HEK293 (cell line): ENCODE measurements at regions of chr22 and their contacts with region 1.

Region 1: GRCh38 chr22:36065775-36066559 is 37.3 kb upstream of the RBFOX2 start:
- H3K4me3 ChIP-seq: peak overlapping the region; percentile 57
- H3K27ac ChIP-seq: peak overlapping the region; percentile 64
- H3K4me1 ChIP-seq: no peaks in the 10 kb centered on the region
- CTCF ChIP-seq: peak; percentile 100

Region 2: DNA sequence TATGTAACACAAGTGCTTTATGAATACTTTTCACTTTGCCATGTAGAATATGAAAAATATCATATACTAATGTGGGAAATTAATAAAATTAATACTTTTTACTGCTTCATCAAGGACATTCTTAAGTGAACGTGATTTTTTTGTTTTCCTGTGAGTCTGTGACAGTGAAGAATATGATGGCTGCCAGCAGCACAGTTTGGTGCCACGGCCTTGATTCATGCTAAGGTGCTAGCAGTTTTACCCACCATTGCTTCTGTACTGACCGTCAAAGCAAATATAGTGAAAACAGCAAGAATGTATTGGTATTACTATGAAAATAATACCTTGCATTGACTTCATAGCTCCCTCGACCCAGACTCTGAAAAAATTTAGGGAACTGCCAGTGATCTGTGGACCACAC is 268.6 kb before region 1 on chr22:
- CTCF ChIA-PET with region 1: interaction called, 10 read pairs
- POLR2A ChIA-PET with region 1: no interaction called
- H3K4me3 ChIP-seq: no peak overlapping the region
- H3K27ac ChIP-seq: no peak overlapping the region
- H3K4me1 ChIP-seq: peaks cover 5% of the 10 kb centered on the region; the same call in 1 of the 2 replicates
- CTCF ChIP-seq: no peak

Region 3: DNA sequence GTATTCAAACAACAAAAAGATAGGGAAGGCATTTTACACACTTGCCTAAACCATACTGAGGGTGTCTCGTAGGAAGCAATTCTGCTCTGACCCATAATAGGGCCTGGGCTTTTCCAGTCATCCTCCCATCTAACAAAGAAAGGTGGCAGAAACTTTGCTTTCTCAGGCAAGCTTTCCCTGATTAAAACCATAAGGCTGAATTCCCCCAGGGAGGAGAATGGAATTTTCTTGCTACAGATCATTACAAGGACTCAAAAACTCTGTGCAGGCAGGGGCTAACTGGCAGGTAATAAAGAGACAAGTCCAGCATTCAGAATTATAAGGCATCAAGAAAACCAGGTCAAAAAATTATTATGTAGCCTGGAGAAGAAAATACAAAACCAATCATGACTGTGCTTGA is 127.7 kb before region 1 on chr22:
- CTCF ChIA-PET with region 1: interaction called, 127 read pairs
- POLR2A ChIA-PET with region 1: interaction called, 3 read pairs
- H3K4me3 ChIP-seq: no peak overlapping the region
- H3K27ac ChIP-seq: no peak overlapping the region
- H3K4me1 ChIP-seq: peaks cover 4% of the 10 kb centered on the region; the same call in 1 of the 2 replicates
- CTCF ChIP-seq: no peak

Region 4: DNA sequence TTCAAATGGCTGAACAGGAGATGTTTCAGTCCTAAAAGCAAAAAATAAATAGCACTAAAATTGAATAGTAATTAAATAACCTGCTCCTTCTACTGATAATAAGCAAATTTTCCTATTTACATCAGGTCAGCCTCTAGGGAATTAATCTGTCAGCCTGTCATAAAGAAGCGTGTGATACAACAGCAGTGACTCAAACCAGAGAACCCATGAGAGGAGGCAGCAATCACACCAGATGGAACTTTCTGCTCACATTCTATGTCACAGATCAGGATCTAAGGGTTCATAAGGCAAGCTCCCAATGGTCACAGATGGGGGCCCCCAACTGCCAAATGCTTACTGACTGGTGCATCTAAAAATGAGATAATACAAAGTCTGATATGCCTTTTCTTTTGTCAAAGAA is 78.5 kb before region 1 on chr22:
- CTCF ChIA-PET with region 1: interaction called, 17 read pairs
- POLR2A ChIA-PET with region 1: no interaction called
- H3K4me3 ChIP-seq: no peak overlapping the region
- H3K27ac ChIP-seq: no peak overlapping the region
- H3K4me1 ChIP-seq: peaks cover 38% of the 10 kb centered on the region
- CTCF ChIP-seq: no peak

Region 5: GRCh38 chr22:36037102-36037758 is 28.7 kb before region 1 on chr22:
- CTCF ChIA-PET with region 1: interaction called, 16 read pairs
- POLR2A ChIA-PET with region 1: interaction called, 3 read pairs
- H3K4me3 ChIP-seq: no peak overlapping the region
- H3K27ac ChIP-seq: no peak overlapping the region
- H3K4me1 ChIP-seq: peaks cover 21% of the 10 kb centered on the region
- CTCF ChIP-seq: no peak

Region 6: GRCh38 chr22:36104988-36105387 is 39.0 kb after region 1 on chr22:
- CTCF ChIA-PET with region 1: interaction called, 20 read pairs
- POLR2A ChIA-PET with region 1: no interaction called
- H3K4me3 ChIP-seq: no peak overlapping the region
- H3K27ac ChIP-seq: no peak overlapping the region
- H3K4me1 ChIP-seq: no peaks in the 10 kb centered on the region
- CTCF ChIP-seq: no peak

Region 7: GRCh38 chr22:36365020-36365411 is 299.0 kb after region 1 on chr22:
- CTCF ChIA-PET with region 1: no interaction called
- POLR2A ChIA-PET with region 1: no interaction called
- H3K4me3 ChIP-seq: no peak overlapping the region
- H3K27ac ChIP-seq: no peak overlapping the region
- H3K4me1 ChIP-seq: peaks cover 57% of the 10 kb centered on the region
- CTCF ChIP-seq: no peak